ENCODE measurements at regions of chr1 and their contacts with region 1.

Region 1: GRCh38 chr1:160006312-160006940 is 25.4 kb downstream of the PIGM start:
- DNase-seq: peak in 4 of 5 donors; percentile 33 to 63 (median 40)
- H3K4me3 ChIP-seq: no peak overlapping the region
- H3K27ac ChIP-seq: no peak overlapping the region
- H3K4me1 ChIP-seq: no peaks in the 10 kb centered on the region
- H3K27me3 ChIP-seq: no peaks in the 10 kb centered on the region
- CTCF ChIP-seq: peak in 2 of 3 donors; percentile 7 to 22
- EP300 ChIP-seq: no peak
- POLR2A ChIP-seq: no peak

Region 2: GRCh38 chr1:159161001-159161718 is 845.3 kb before region 1 on chr1:
- intact Hi-C with region 1: loop called in 1 of 4 experiments (anchors 10 kb)
- DNase-seq: peak; percentile 37 to 66 (median 53)
- H3K4me3 ChIP-seq: no peak overlapping the region
- H3K27ac ChIP-seq: no peak overlapping the region
- H3K4me1 ChIP-seq: no peaks in the 10 kb centered on the region
- H3K27me3 ChIP-seq: no peaks in the 10 kb centered on the region
- CTCF ChIP-seq: peak in 2 of 3 donors; percentile 48 to 59
- EP300 ChIP-seq: no peak
- POLR2A ChIP-seq: no peak

Region 3: GRCh38 chr1:159945483-159946241 is 60.8 kb before region 1 on chr1 and contains the start of gene IGSF9:
- intact Hi-C with region 1: loop called in 2 of 4 experiments (anchors 5 to 10 kb)
- DNase-seq: peak; percentile 85 to 91 (median 90)
- H3K4me3 ChIP-seq: peak within 1 kb of the TSS; percentile 36
- H3K27ac ChIP-seq: no peak within 1 kb of the TSS
- H3K4me1 ChIP-seq: no peaks in the 10 kb centered on the region
- H3K27me3 ChIP-seq: no peaks in the 10 kb centered on the region
- CTCF ChIP-seq: peak; percentile 45 to 76 (median 73)
- EP300 ChIP-seq: no peak
- POLR2A ChIP-seq: no peak
- total RNA-seq, gene IGSF9: 0.83 to 14.0 (median 2.0) TPM

Region 4: GRCh38 chr1:159953536-159954515 is 52.6 kb before region 1 on chr1 and contains the start of gene SLAMF9:
- intact Hi-C with region 1: loop called in 2 of 4 experiments (anchors 5 to 10 kb)
- DNase-seq: no peak
- H3K4me3 ChIP-seq: no peak within 1 kb of the TSS
- H3K27ac ChIP-seq: no peak within 1 kb of the TSS
- H3K4me1 ChIP-seq: no peaks in the 10 kb centered on the region
- H3K27me3 ChIP-seq: no peaks in the 10 kb centered on the region
- CTCF ChIP-seq: no peak
- EP300 ChIP-seq: no peak
- POLR2A ChIP-seq: no peak
- total RNA-seq, gene SLAMF9: not detected